Motor neuron (in vitro differentiated cells): ENCODE measurements at regions of chr9 and their contacts with region 1.

Region 1: GRCh38 chr9:15135164-15135792 is 171.7 kb downstream of the TTC39B start:
- ATAC-seq: peak; percentile 70 to 98 (median 86)
- H3K4me3 ChIP-seq: no peak overlapping the region
- H3K27ac ChIP-seq: no peak overlapping the region
- H3K4me1 ChIP-seq: no peaks in the 10 kb centered on the region

Region 2: DNA sequence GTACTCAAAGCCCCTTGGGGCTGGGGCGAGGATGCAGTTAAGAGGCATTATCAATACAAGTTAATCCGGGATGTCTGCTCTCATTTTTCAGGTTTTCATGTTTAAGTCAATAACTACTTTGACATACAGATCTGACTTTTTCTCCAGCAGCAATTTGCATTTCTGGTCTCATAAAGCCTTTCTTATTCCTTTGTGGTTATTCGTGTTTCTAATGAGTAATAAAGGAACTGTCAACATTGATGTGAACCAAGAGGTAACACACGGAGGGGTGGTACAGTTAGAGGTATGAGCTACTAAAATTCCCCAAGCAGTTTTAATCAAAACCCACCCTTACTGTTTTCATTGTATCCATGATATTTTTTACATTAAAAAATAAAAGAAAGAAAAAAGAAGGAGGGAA is 683.3 kb before region 1 on chr9:
- in situ Hi-C with region 1: loop called in 1 of 9 experiments (anchors 25 kb)
- ATAC-seq: no peak
- H3K4me3 ChIP-seq: no peak overlapping the region
- H3K27ac ChIP-seq: no peak overlapping the region
- H3K4me1 ChIP-seq: no peaks in the 10 kb centered on the region

Region 3: DNA sequence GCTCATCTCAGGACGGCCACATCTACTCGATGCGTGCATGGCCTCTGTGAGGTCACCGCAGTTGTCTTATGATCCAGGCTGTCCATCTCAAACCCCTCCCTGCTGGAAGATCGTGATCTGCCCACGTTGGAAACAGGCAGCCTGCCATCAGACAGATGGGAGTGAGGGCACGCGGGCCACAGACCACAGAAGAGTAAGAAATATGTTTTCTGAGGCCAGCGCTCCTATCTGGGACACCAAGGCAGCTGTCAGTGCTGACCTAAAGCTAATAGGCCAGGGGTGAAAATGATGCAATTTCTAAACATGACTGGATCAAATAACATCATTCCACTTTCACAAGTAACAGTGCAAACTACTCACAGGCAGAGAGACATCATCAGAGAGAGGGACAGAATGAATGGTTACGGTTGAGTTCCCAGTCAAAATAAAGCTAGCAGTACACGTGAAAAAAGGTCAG is 355.7 kb before region 1 on chr9:
- in situ Hi-C with region 1: loop called in 1 of 9 experiments (anchors 25 kb)
- ATAC-seq: peak in 5 of 8 experiments; percentile 64 to 96 (median 95)
- H3K4me3 ChIP-seq: no peak overlapping the region
- H3K27ac ChIP-seq: no peak overlapping the region
- H3K4me1 ChIP-seq: no peaks in the 10 kb centered on the region

Region 4: DNA sequence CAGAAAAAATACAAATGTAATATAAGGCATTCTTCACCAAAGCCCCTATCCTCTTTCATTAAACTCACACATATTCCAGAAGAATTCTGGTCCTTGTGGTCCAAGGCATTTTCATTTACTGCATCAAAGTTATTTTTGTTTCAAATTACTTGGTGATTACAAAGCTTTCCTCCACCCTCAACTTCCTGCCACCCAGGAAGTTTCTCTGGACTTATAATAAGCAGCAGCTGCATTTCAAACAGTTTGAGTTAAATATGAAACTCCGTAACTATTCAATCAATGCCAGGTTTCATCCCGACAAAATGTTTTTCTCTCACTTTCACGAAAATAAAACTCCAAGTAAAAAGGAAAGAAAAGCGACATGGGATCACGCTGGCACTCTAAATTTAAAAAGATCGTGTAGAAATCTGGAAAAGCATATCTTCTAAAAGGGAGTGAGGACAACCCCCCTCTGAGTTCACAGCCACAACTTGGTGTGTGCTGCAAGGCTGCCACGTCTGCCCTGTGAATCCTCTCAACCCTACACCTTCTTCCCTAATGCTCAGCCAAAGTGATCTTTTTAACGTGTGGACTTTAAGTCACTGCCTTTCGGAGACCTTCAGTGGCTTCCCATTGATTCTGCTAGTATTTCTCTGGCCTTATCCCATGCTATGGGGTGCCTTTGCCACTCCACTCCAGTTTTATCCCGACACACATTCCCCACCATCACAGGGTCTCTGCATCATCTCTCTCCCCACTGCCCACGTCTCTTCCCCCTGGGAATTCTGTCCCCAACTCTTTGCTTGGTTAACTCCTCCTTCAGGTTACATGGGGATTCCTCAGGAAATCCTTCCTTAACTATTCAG is 321.7 kb before region 1 on chr9:
- in situ Hi-C with region 1: loop called in 1 of 9 experiments (anchors 25 kb)
- ATAC-seq: peak in 2 of 8 experiments; percentile 32 to 53
- H3K4me3 ChIP-seq: no peak overlapping the region
- H3K27ac ChIP-seq: no peak overlapping the region
- H3K4me1 ChIP-seq: no peaks in the 10 kb centered on the region